Sciatic nerve (tissue), 2 donors: ENCODE measurements at regions of chr15 and their contacts with region 1.

Region 1: DNA sequence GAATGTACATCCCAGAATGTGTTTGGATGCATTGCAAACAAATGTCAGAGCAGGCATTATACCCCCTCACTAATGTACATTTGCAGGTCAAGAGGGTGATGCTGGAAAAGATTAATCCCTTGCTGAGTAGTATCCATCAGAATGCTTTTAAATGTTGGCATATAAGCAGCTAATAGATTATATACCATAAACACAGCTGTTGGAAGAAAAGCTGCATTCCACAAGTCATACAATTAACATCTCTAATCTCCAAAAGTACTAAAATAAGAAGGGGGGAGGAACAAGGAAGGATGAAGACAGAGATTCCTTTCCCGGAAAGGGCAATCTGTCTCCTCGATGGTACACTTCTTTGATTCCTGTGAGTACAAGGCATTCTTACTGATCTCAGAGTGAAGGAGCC is 445.7 kb upstream of the CDIN1 start:
- DNase-seq: no peak
- ATAC-seq: no peak

Region 2: GRCh38 chr15:35007394-35007793 is 1126.3 kb before region 1 on chr15:
- intact Hi-C with region 1: loop called (anchors 5 kb)
- DNase-seq: no peak
- ATAC-seq: no peak

Region 3: DNA sequence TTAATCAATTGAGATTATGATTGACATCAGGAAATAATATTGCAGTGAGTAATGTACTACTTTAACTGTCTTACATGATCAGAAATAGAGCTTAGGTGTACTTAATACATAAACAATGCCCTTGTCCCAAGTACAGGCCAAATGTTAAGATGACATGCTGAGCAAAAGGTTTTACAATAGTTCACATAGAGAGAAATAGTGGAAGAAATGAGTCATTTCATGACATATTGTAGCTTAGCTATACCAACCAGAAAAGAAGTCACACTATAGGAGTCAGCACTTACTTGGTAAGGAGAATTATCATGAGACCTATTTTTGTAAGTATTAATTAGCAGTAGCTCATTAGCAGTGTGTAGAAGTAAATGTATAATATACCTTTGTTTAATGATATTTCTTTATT is 952.2 kb before region 1 on chr15:
- intact Hi-C with region 1: no loop called
- DNase-seq: no peak
- ATAC-seq: no peak